HCT116 (cell line): ENCODE measurements at regions of chr1 and their contacts with region 1.

Region 1: GRCh38 chr1:9270290-9270883 is 22.3 kb upstream of the SPSB1 start:
- DNase-seq: no peak
- ATAC-seq: peak; percentile 35; the same call in 1 of the 2 replicates
- H3K4me3 ChIP-seq: no peak overlapping the region
- H3K27ac ChIP-seq: no peak overlapping the region
- H3K4me1 ChIP-seq: peaks cover 19 to 25% of the 10 kb centered on the region in 2 experiments
- H3K27me3 ChIP-seq: no peaks in the 10 kb centered on the region
- CTCF ChIP-seq: no peak
- POLR2A ChIP-seq: no peak
- RAD21 ChIP-seq: no peak

Region 2: DNA sequence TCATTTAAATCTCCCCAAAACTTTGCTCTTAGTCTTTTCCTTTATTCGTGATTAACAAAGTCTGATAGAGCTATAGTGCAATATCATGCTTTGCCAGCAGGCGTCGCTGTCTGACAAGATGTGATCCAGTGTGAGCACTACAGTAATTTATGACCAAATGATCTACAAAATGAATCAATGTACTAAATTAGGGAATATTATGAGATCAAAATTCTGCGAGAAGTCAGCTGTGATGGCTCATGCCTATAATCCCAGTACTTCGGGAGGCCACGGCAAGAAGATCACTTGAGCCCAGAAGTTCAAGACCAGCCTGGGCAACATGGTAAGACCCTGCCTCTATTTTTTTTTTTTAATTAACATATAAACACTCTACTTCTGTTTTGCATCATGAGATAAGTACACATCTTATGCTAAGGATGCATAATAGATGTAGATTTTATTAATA is 18.7 kb after region 1 on chr1:
- CTCF ChIA-PET with region 1: interaction called, 8 read pairs
- POLR2A ChIA-PET with region 1: no interaction called
- RAD21 ChIA-PET with region 1: interaction called in 1 of 2 experiments, 7 read pairs
- intact Hi-C with region 1: loop called (anchors 1 kb)
- DNase-seq: peak; percentile 77
- ATAC-seq: no peak
- H3K4me3 ChIP-seq: no peak overlapping the region
- H3K27ac ChIP-seq: no peak overlapping the region
- H3K4me1 ChIP-seq: peaks cover 6 to 14% of the 10 kb centered on the region in 2 experiments
- H3K27me3 ChIP-seq: no peaks in the 10 kb centered on the region
- CTCF ChIP-seq: peak; percentile 88 to 96 (median 96)
- POLR2A ChIP-seq: no peak
- RAD21 ChIP-seq: peak; percentile 97

Region 3: GRCh38 chr1:9455487-9456234 is 185.3 kb after region 1 on chr1:
- CTCF ChIA-PET with region 1: interaction called, 27 read pairs
- POLR2A ChIA-PET with region 1: no interaction called
- RAD21 ChIA-PET with region 1: interaction called, 3 to 4 read pairs
- intact Hi-C with region 1: loop called (anchors 1 kb)
- DNase-seq: peak; percentile 24
- ATAC-seq: peak; percentile 92
- H3K4me3 ChIP-seq: no peak overlapping the region
- H3K27ac ChIP-seq: no peak overlapping the region
- H3K4me1 ChIP-seq: no peaks in the 10 kb centered on the region
- H3K27me3 ChIP-seq: no peaks in the 10 kb centered on the region
- CTCF ChIP-seq: peak; percentile 81 to 94 (median 83)
- POLR2A ChIP-seq: no peak
- RAD21 ChIP-seq: peak; percentile 97

Region 4: GRCh38 chr1:9573723-9574122 is 303.3 kb after region 1 on chr1:
- CTCF ChIA-PET with region 1: no interaction called
- POLR2A ChIA-PET with region 1: no interaction called
- RAD21 ChIA-PET with region 1: no interaction called
- intact Hi-C with region 1: loop called (anchors 5 kb)
- DNase-seq: no peak
- ATAC-seq: no peak
- H3K4me3 ChIP-seq: no peak overlapping the region
- H3K27ac ChIP-seq: no peak overlapping the region
- H3K4me1 ChIP-seq: no peaks in the 10 kb centered on the region
- H3K27me3 ChIP-seq: no peaks in the 10 kb centered on the region
- CTCF ChIP-seq: peak; percentile 20 to 57 (median 44); a peak in 4 of 6 replicates
- POLR2A ChIP-seq: no peak
- RAD21 ChIP-seq: peak; percentile 68